Dendritic cell treated with granulocyte-macrophage colony-stimulating factor and Interleukin-4, amounts not matched to agents 40 ng/mL and 50 ng/mL, for 4 days (primary cell): ENCODE measurements at regions of chr6 and their contacts with region 1.

Region 1: DNA sequence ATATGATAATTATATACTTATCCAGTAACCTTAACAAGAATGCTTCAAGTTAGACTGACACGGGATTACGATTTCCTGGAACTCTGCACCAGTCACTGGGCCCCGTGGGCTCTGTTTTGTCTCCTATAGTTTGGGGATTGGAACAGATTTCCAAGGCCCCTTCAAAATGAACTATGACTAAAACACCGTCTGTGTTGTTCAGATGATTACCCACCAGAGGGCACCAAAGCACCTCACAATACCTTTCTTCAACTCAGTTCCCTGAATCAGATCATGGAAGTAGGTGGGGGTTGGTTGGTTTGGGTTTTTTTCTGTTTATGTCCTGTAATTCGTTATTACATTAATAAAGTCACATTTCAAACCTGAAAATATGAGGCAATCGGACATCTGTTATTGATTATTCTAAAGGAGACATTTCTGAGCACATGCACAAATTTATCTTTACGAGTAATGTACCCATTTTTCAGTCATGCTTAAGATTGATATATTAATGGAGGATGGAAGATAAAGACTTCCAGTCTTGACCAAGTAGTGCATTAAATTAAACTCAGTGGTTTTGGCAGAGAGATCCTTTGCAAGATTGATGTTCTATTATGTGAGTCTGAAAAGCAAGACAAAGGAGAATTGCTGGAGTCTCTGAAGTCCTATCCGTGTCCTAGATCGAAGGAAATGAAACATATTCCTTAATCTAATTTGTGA is 112.0 kb upstream of the COL21A1 start:
- H3K4me3 Mint-ChIP-seq: no peak overlapping the region
- H3K27ac Mint-ChIP-seq: no peak overlapping the region
- H3K4me1 Mint-ChIP-seq: no peaks in the 10 kb centered on the region
- H3K27me3 Mint-ChIP-seq: peaks cover 6% of the 10 kb centered on the region

Region 2: GRCh38 chr6:55980627-55981211 is 378.6 kb before region 1 on chr6:
- intact Hi-C with region 1: no loop called
- H3K4me3 Mint-ChIP-seq: no peak overlapping the region
- H3K27ac Mint-ChIP-seq: no peak overlapping the region
- H3K4me1 Mint-ChIP-seq: no peaks in the 10 kb centered on the region
- H3K27me3 Mint-ChIP-seq: peaks cover 3% of the 10 kb centered on the region

Region 3: DNA sequence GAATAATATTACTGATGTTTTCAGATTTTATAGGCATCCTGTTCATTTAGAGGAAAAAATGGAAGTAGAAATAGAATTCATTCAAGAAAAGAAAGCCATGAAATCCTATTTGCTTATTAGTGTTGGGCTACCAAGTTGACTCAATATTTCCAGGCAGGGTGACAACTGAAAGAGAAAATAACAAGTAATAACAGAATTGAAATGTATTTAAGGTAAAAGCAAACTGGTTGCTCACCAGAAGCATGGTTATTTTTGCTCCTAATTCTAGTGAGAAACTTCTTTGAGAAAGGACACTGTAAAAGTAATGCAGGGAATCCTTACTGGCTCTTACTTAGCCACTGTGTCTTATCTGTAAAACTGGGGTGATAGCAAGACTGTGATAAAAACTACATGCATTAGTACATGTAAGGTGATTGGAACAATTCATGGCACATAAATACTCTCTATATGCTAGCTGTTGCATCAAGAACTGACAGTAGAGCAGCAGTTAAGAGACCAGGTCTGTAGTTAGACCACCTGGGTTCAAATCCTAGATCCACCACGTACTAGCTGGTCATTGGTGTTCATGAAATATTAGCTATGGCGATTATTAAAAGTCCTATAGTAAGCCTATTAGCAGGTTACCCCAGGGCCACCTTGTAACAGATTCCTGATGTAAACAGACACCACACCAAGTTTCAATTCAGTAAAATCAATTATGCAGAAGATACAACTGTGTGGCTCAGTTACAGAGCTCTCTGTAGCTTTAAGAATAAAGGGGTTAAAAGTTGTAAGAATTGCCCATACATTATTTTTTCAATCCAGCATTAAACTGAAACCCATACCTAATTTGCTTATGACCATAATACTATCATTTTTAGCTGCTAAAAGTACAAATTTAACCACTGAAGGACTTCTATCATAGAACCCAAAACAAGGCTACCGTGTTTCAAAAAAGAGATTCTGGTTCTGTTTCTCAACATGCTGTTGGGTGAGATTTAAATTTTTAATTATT is 47.2 kb after region 1 on chr6:
- intact Hi-C with region 1: no loop called
- H3K4me3 Mint-ChIP-seq: no peak overlapping the region
- H3K27ac Mint-ChIP-seq: no peak overlapping the region
- H3K4me1 Mint-ChIP-seq: no peaks in the 10 kb centered on the region
- H3K27me3 Mint-ChIP-seq: peaks cover 1% of the 10 kb centered on the region

Region 4: DNA sequence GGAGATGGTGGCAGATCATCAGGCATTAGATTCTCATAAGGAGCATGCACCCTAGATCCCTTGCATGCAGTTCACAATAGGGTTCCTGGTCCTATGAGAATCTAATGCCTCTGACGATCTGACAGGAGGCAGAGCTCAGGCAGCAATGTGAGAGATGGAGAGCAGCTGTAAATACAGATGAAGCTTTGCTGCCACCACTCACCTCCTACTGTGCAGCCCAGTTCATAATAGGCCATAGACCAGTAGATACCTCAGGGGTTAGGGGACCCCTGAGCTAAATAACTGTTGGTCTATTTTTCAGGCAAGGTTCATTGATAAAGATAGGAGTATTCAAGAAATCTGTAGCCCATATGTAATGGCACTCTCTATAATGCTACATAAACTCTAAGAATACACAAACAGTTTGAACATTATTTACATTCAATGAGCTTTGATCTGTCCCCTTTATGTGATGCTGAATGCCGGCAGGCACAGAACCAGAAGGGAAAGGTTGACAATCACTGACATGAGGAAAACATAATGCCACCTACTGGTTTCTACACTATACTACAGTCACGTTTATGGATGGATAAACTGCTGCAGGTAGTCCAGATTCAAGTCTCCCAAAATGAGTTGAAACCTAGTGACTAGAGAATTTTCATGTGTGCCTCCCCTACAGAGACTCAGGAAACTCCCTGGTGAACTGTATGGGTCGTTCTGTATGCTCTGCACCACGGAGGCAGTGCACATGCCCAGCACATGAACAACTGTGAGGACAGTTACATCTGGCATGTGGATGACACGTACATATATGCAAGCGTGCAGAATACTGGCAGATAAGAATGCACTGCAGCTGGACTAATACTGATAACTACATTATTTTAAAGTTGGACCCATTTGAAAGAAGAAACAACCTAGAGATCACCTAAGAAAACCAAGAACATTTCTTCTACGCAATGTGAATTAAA is 211.3 kb after region 1 on chr6:
- intact Hi-C with region 1: loop called (anchors 1 kb)
- H3K4me3 Mint-ChIP-seq: no peak overlapping the region
- H3K27ac Mint-ChIP-seq: no peak overlapping the region
- H3K4me1 Mint-ChIP-seq: no peaks in the 10 kb centered on the region
- H3K27me3 Mint-ChIP-seq: no peaks in the 10 kb centered on the region

Region 5: DNA sequence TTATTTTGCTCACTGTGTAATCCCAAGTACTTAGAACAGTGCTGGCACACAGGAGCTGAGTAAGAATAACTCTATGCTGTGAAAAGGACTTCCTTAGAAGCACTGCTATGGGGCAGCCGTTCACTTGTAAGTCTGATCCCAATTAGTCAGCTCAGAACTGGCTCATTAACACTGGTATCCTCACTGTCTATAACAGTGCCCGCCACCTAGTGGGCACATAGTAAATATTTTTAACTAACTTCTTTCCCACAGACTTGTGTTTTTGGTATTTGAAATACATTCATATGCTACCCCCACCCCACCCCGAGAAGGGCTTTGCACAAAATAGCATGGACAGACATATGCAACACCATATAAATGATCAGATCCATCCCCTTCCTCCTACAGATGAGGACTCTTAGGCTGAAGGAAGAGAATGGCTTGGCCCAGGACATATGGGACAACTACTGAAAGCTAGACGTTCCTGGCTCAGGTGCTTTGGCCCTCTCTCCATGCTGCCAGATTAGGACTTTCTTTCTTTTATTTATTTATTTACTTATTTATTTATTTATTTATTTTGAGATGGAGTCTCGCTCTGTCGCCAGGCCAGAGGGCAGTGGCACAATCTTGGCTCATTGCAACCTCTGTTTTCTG is 236.3 kb after region 1 on chr6:
- intact Hi-C with region 1: loop called (anchors 1 kb)
- H3K4me3 Mint-ChIP-seq: no peak overlapping the region
- H3K27ac Mint-ChIP-seq: no peak overlapping the region
- H3K4me1 Mint-ChIP-seq: peaks cover 29% of the 10 kb centered on the region
- H3K27me3 Mint-ChIP-seq: no peaks in the 10 kb centered on the region

Region 6: DNA sequence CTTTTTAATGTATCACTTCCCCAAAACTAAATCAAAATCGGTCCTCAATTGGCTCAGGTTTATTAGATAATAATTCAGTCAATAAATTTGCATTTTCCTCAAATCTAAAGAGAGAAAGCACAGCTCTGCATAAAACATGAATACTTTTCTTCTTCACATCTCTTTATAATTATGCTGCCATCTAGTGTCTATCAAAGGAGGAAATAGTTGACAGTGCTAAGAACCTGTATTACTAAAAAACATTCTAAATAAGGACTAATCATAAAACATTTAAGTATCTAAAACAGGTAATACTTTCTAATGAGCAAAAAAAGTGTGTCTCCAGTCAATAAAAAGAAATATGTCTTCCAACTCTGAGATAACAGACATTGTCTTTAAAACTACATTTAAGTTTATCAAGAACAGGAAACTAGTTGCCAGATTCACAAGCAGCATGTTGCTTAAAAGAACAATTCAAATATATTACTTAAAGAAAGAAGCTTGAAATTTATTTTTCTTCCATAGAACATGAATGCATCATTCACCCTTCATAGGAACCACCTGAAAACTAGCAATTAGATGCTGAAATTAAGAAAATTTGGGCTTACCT is 339.8 kb after region 1 on chr6:
- intact Hi-C with region 1: loop called (anchors 5 kb)
- H3K4me3 Mint-ChIP-seq: no peak overlapping the region
- H3K27ac Mint-ChIP-seq: no peak overlapping the region
- H3K4me1 Mint-ChIP-seq: peaks cover 22% of the 10 kb centered on the region
- H3K27me3 Mint-ChIP-seq: no peaks in the 10 kb centered on the region

Region 7: DNA sequence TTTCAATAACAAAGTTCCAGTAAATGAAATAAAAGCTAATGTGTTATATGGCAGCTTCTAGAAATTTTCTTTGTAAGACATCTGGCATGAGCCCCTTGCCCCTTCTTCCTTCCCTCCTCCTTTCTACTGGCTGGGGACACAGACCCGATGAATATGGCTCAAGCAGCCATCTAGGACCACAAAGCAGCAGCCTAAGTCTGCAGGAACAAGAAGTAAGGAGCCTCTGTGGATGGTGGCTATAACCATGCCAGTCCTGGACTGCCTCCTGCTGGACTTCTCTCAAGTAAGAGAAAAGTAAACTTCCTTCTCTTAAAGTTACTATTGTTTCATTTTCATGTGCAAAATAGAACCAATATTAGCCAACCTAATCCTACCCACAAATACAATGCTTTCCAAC is 398.2 kb after region 1 on chr6:
- intact Hi-C with region 1: loop called (anchors 5 kb)
- H3K4me3 Mint-ChIP-seq: no peak overlapping the region
- H3K27ac Mint-ChIP-seq: no peak overlapping the region
- H3K4me1 Mint-ChIP-seq: peaks cover 26% of the 10 kb centered on the region
- H3K27me3 Mint-ChIP-seq: no peaks in the 10 kb centered on the region